Activated CD4-positive, alpha-beta T cell treated with anti-CD3 and anti-CD28 coated beads for 36 hours (primary cell): ENCODE measurements at regions of chr18 and their contacts with region 1.

Region 1: DNA sequence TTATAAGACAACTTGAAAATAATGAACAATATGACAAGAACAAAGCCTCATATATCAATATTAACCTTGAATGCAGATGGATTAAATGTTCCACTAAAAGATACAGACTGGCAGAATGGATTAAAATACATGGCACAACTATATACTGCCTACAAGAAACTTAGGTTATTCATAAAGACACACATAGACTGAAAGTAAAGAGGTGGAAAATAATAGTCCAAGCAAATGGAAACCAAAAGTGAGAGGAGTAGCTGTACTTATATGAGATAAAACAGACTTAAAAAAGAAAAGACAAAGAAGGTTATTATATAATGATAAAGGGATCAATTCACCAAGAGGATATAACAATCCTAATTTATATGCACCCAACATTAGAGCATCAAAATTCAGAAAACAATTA is 18.2 kb downstream of the LMAN1 start:
- DNase-seq: no peak
- ATAC-seq: peak; percentile 95
- H3K4me3 Mint-ChIP-seq: no peak overlapping the region
- H3K27ac Mint-ChIP-seq: peak overlapping the region; percentile 65
- H3K4me1 Mint-ChIP-seq: peaks cover 39% of the 10 kb centered on the region
- H3K27me3 Mint-ChIP-seq: no peaks in the 10 kb centered on the region

Region 2: DNA sequence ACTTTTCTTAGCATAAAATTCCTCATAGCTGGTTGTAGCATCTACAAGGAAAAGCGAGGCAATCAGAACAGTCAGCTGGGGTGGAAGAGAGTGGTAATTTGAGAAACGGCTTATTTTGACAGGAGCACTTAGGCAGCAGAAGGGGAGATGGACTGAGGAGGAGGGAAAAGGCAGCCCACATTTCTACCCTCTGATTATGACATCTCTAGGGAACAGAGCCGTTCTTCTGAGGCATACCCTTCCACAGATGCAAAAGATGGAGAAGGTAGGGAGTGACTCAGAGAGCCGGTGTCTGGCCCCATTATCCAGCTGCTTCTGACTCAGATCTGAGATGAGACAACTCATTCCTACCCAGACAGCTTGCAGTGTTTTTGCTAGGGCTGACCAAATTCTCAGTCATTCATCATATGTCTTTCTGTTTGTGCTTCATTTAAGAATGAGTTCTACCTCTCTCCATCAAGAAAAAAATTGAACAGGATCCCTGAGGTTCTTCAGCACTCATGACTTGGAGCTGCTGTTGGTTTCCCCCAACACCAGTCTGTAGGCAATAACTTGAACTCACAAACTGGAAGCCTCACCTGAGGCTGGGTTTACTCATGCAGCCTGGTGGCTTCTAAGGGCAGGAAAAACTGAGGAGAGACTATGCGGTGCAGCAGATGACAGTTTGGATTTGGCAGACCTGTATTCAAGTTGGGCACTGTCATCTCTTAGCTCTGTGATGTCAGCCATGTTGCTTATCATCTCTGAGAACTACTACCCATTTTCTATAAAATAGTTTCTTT is 217.0 kb before region 1 on chr18:
- CTCF ChIA-PET with region 1: no interaction called
- POLR2A ChIA-PET with region 1: no interaction called
- intact Hi-C with region 1: no loop called
- DNase-seq: peak; percentile 66
- ATAC-seq: peak; percentile 97
- H3K4me3 Mint-ChIP-seq: no peak overlapping the region
- H3K27ac Mint-ChIP-seq: no peak overlapping the region
- H3K4me1 Mint-ChIP-seq: peaks cover 5% of the 10 kb centered on the region
- H3K27me3 Mint-ChIP-seq: peaks cover 27% of the 10 kb centered on the region

Region 3: GRCh38 chr18:59352250-59352855 is 11.5 kb after region 1 on chr18:
- CTCF ChIA-PET with region 1: interaction called, 4 read pairs
- POLR2A ChIA-PET with region 1: no interaction called
- intact Hi-C with region 1: loop called in 1 of 2 experiments (anchors 1 kb)
- DNase-seq: no peak
- ATAC-seq: no peak
- H3K4me3 Mint-ChIP-seq: no peak overlapping the region
- H3K27ac Mint-ChIP-seq: peak overlapping the region; percentile 59
- H3K4me1 Mint-ChIP-seq: peaks cover 29% of the 10 kb centered on the region
- H3K27me3 Mint-ChIP-seq: no peaks in the 10 kb centered on the region

Region 4: DNA sequence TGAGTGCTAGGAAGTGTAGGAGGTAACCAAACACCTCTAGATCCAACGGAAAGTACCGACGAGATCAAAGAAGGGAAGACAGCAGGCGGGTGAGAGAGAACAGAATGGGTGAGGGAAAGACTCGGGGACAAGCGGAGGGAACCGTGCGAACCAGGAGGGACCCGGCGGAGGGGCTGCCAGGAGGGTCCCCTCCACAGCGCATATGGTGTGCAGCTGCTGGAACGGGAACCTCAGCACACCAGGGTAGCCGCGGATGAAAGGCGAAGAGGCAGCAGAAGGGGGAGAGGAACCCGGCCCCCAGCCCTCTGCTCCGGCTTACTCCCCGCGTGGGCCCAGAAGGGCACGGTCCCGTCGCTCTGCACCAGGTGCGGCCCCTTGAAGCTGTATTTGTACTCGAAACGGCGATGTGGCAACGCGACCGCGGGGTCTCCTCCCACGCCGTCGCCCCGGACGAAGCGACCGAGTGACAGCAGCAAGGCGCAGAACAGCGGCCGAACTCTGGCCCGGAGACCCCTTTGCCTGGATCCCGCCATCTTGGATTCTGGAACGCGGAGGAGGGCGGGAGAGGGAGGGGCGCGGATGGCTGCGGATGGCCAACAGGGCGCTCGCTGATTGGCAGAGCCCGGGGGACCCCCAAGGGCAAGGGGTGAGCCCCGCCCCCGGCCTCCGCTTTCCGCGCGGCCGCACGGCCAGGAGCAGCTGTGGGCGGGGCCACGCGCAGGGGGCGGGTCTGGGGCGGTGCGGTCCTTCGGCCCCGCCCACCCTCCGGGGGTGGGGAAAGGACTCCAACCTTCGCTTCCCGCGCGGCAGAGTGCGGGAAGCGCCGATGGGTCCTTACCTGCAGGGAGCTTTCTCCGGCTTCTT is 18.1 kb after region 1 on chr18 and contains the start of gene LMAN1:
- CTCF ChIA-PET with region 1: interaction called, 4 read pairs
- POLR2A ChIA-PET with region 1: no interaction called
- intact Hi-C with region 1: loop called (anchors 1 to 2 kb)
- DNase-seq: peak; percentile 97
- ATAC-seq: peak; percentile 93
- H3K4me3 Mint-ChIP-seq: peak within 1 kb of the TSS; percentile 98
- H3K27ac Mint-ChIP-seq: peak within 1 kb of the TSS; percentile 99
- H3K4me1 Mint-ChIP-seq: peaks cover 29% of the 10 kb centered on the region
- H3K27me3 Mint-ChIP-seq: no peaks in the 10 kb centered on the region
- total RNA-seq, gene LMAN1: 121 to 134 TPM